CD4-positive, alpha-beta memory T cell (primary cell): ENCODE measurements at regions of chr6 and their contacts with region 1.

Region 1: DNA sequence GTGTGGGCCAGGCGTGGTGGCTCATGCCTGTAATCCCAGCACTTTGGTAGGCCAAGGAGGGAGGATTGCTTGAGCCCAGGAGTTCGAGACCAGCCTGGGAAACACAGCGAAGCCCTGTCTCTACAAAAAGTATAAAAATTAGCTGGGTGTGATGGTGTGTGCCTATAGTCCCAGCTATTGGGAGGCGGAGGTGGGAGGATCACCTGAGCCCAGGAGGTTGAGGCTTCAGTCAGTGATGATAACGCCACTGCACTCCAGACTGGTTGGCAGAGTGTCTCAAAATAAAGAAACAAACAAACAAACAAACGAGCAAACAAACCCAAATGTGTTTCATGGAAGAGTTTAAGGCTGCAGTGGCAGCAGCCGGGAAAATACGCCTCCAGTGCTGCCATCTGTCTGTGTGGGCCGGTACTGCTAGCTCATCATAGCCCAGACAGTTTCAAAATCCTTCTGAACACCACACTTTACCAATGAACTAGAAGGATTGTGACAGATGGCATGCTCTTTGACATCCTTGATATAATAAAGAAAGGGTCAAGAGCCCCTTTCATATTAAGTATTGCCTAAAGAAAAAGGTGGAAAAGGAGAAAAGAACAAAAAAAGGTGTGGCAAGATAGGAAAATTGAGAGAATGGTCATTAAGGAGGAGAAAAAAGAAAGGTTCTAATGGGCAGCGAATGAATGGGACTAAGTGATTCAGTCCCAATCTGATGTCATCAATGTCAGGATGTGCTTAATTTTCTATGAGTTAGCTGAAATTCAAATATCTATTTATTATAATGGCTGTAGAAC is 298.6 kb downstream of the SYNE1 start:
- DNase-seq: peak in 4 of 5 donors; percentile 44 to 62 (median 52)
- H3K4me3 ChIP-seq: no peak overlapping the region
- H3K4me3 Mint-ChIP-seq: peak overlapping the region in 1 of 8 donors; percentile 45
- H3K27ac ChIP-seq: no peak overlapping the region
- H3K27ac Mint-ChIP-seq: no peak overlapping the region
- H3K4me1 ChIP-seq: no peaks in the 10 kb centered on the region
- H3K4me1 Mint-ChIP-seq: peaks cover 0 to 2% (median 0%) of the 10 kb centered on the region in 4 donors
- H3K27me3 ChIP-seq: no peaks in the 10 kb centered on the region
- H3K27me3 Mint-ChIP-seq: no peaks in the 10 kb centered on the region

Region 2: DNA sequence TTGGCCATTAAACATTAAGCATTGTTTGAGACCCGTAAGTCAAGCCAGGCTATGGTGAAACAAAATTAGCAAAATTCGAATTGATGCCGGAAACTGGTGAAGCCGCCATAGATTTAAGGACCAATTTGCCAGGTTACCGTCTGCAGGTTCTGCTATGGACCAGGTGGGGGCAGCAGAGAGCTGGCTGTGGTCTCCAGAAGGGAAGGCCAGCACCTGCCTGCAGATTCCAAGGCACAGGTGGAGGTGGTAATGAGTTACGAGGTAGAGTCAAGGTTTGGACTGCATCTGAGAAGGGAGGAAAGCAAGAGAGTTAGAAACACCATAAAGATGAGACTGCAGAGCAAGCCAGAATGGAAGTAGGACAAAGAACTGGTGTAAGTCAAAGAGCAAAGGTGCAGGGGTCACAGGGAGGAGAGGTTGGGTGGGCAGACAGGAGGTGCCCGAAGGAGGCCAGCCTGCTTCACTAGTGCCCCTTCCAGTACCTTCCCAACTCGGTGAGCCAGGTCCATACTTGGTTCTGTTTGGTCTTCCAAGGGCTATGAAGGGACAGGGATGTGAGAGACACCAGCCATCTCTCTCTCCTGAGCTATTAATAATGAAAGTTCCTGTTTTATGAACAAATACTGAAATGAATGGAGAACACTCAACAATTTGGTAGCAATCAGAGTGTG is 662.6 kb before region 1 on chr6:
- CTCF ChIA-PET with region 1: interaction called, 3 read pairs
- POLR2A ChIA-PET with region 1: no interaction called
- intact Hi-C with region 1: loop called (anchors 1 kb)
- DNase-seq: peak; percentile 46 to 57 (median 48)
- H3K4me3 ChIP-seq: no peak overlapping the region
- H3K4me3 Mint-ChIP-seq: no peak overlapping the region
- H3K27ac ChIP-seq: no peak overlapping the region
- H3K27ac Mint-ChIP-seq: no peak overlapping the region
- H3K4me1 ChIP-seq: no peaks in the 10 kb centered on the region
- H3K4me1 Mint-ChIP-seq: peaks cover 0 to 2% (median under 1%) of the 10 kb centered on the region in 4 donors
- H3K27me3 ChIP-seq: no peaks in the 10 kb centered on the region
- H3K27me3 Mint-ChIP-seq: peaks cover 1 to 4% of the 10 kb centered on the region in 2 donors

Region 3: DNA sequence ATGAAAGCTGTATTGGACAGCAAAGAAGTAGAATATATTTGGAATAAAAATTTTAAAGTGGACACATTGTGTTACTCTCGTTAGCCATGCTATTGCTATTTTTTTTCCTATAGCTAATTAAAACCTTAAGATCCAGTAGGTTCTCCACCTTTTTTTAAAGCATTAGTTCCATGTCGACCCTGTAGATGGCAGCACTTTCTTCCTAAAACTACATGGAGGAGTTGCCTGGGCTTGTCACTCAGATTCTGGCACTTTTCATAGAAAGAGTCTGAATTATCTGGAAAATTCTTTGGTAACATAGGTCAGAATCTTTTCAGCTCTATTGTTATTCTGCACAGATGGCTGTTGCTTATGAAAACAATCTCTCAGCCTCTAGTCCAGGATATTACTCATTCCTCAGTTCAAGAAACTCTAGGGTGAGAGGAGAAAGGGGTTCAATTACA is 573.1 kb before region 1 on chr6:
- CTCF ChIA-PET with region 1: no interaction called
- POLR2A ChIA-PET with region 1: no interaction called
- intact Hi-C with region 1: loop called (anchors 1 kb)
- DNase-seq: peak in 4 of 5 donors; percentile 35 to 43 (median 38)
- H3K4me3 ChIP-seq: no peak overlapping the region
- H3K4me3 Mint-ChIP-seq: no peak overlapping the region
- H3K27ac ChIP-seq: no peak overlapping the region
- H3K27ac Mint-ChIP-seq: no peak overlapping the region
- H3K4me1 ChIP-seq: no peaks in the 10 kb centered on the region
- H3K4me1 Mint-ChIP-seq: peaks cover 7 to 13% (median 11%) of the 10 kb centered on the region in 4 donors
- H3K27me3 ChIP-seq: no peaks in the 10 kb centered on the region
- H3K27me3 Mint-ChIP-seq: no peaks in the 10 kb centered on the region

Region 4: GRCh38 chr6:152057832-152058498 is 280.6 kb before region 1 on chr6:
- CTCF ChIA-PET with region 1: no interaction called
- POLR2A ChIA-PET with region 1: no interaction called
- intact Hi-C with region 1: no loop called
- DNase-seq: no peak
- H3K4me3 ChIP-seq: no peak overlapping the region
- H3K4me3 Mint-ChIP-seq: no peak overlapping the region
- H3K27ac ChIP-seq: no peak overlapping the region
- H3K27ac Mint-ChIP-seq: no peak overlapping the region
- H3K4me1 ChIP-seq: no peaks in the 10 kb centered on the region
- H3K4me1 Mint-ChIP-seq: peaks cover 0 to 5% (median under 1%) of the 10 kb centered on the region in 4 donors
- H3K27me3 ChIP-seq: no peaks in the 10 kb centered on the region
- H3K27me3 Mint-ChIP-seq: peaks cover 0 to 2% of the 10 kb centered on the region in 2 donors

Region 5: DNA sequence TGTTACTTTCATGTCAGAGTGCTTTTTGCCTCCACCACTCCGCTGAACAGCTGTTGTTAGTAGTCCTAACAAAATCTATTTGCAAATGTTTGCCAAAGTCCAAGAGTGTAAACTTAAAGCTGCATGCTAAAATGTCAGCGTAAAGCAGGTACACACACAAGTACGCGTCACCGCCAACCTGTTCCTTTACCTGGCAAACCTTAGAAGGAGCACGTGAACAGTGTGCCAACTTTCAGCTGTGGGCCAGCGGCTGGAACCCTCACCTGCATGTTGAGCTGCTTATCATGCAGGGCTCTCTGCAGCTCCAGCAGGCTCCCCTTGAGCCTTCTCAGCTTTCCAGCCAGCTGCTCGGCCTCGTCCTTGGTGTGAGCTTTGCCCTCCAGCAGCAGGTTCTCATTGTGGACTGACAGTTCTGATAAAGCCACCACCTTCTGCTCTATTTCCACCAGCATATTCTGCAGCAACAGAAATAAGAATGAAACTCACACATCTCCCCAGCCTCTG is 60.7 kb before region 1 on chr6:
- CTCF ChIA-PET with region 1: interaction called, 9 read pairs
- POLR2A ChIA-PET with region 1: no interaction called
- intact Hi-C with region 1: loop called (anchors 2 kb)
- DNase-seq: no peak
- H3K4me3 ChIP-seq: no peak overlapping the region
- H3K4me3 Mint-ChIP-seq: no peak overlapping the region
- H3K27ac ChIP-seq: no peak overlapping the region
- H3K27ac Mint-ChIP-seq: peak overlapping the region in 2 of 7 donors; percentile 35 to 61
- H3K4me1 ChIP-seq: no peaks in the 10 kb centered on the region
- H3K4me1 Mint-ChIP-seq: no peaks in the 10 kb centered on the region
- H3K27me3 ChIP-seq: no peaks in the 10 kb centered on the region
- H3K27me3 Mint-ChIP-seq: no peaks in the 10 kb centered on the region

Region 6: DNA sequence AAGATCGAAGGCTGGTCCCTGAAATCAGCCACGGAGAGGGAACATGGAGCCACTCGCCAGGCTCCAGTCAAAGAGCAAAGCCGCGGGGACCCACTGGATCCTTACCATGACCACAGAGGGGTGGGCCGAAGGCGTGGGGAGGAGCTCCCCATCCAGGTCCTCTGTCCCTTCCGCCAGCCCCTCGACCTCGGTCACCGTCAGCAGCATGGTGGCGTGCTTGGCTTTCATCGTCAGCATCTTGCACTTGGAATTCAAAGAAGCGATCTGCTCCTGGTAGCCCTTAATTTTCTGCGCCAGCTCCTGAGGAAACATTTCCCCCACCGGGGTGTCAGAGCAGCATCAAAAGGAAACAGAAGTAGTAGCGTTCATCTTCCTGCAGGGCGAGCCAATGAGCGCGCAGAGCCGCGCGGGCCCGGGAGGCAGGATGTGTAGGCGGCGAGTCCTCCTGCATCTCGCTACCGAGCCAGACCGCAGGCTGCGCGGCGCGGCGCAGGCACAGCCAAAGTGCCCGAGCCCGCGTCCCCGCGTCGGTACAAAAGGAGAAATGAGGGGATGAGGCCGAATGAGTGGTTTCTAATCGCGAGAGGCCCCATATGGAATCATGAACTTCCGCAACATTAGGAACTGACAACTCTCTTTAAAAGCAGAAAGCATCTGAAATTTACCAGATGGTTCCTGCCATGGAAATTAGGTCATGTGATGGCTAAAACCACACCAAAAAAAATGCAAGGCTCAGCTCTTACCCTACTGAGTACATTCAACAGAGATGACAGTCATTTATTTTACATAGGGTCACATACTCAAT is 36.6 kb before region 1 on chr6:
- CTCF ChIA-PET with region 1: interaction called, 187 read pairs
- POLR2A ChIA-PET with region 1: interaction called, 22 read pairs
- intact Hi-C with region 1: loop called (anchors 1 kb)
- DNase-seq: peak; percentile 88 to 92 (median 90)
- H3K4me3 ChIP-seq: peak overlapping the region; percentile 78 to 85
- H3K4me3 Mint-ChIP-seq: peak overlapping the region; percentile 99 to 100 (median 100)
- H3K27ac ChIP-seq: peak overlapping the region; percentile 87
- H3K27ac Mint-ChIP-seq: peak overlapping the region; percentile 95 to 100 (median 98)
- H3K4me1 ChIP-seq: peaks cover 40% of the 10 kb centered on the region
- H3K4me1 Mint-ChIP-seq: peaks cover 29 to 47% (median 36%) of the 10 kb centered on the region in 4 donors
- H3K27me3 ChIP-seq: no peaks in the 10 kb centered on the region
- H3K27me3 Mint-ChIP-seq: no peaks in the 10 kb centered on the region

Region 7: DNA sequence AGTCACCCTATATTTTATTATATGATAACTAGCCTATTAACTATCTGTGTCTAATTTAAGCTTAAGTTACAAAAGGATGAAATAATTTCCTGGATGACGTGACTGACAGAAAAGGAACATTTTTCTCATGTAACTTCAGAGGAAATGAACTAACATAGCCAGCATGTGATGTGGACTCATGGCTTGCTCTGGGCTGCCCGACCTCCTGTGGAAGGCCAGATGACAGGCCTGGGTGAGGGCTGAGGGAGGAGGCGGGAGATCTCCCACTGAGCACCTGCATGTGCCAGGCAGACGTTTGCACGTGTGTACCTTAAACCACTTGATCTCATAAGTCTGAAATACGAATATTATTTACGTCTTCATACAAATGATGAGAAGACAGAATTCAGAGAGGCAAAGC is 22.5 kb before region 1 on chr6:
- CTCF ChIA-PET with region 1: interaction called, 37 read pairs
- POLR2A ChIA-PET with region 1: interaction called, 5 read pairs
- intact Hi-C with region 1: no loop called
- DNase-seq: no peak
- H3K4me3 ChIP-seq: no peak overlapping the region
- H3K4me3 Mint-ChIP-seq: no peak overlapping the region
- H3K27ac ChIP-seq: no peak overlapping the region
- H3K27ac Mint-ChIP-seq: no peak overlapping the region
- H3K4me1 ChIP-seq: peaks cover 1% of the 10 kb centered on the region
- H3K4me1 Mint-ChIP-seq: peaks cover 0 to 4% (median 2%) of the 10 kb centered on the region in 4 donors
- H3K27me3 ChIP-seq: no peaks in the 10 kb centered on the region
- H3K27me3 Mint-ChIP-seq: peaks cover 2 to 7% of the 10 kb centered on the region in 2 donors

Region 8: GRCh38 chr6:152372945-152373344 is 34.4 kb after region 1 on chr6:
- CTCF ChIA-PET with region 1: no interaction called
- POLR2A ChIA-PET with region 1: no interaction called
- intact Hi-C with region 1: no loop called
- DNase-seq: no peak
- H3K4me3 ChIP-seq: no peak overlapping the region
- H3K4me3 Mint-ChIP-seq: no peak overlapping the region
- H3K27ac ChIP-seq: no peak overlapping the region
- H3K27ac Mint-ChIP-seq: no peak overlapping the region
- H3K4me1 ChIP-seq: no peaks in the 10 kb centered on the region
- H3K4me1 Mint-ChIP-seq: no peaks in the 10 kb centered on the region
- H3K27me3 ChIP-seq: no peaks in the 10 kb centered on the region
- H3K27me3 Mint-ChIP-seq: peaks cover 11 to 12% of the 10 kb centered on the region in 2 donors